Activated T-helper 1 cell treated with anti-CD3 and anti-CD28 coated beads, Interleukin-12 subunit alpha, Interleukin-12 subunit beta, Interleukin-2, Interleukin-4 antibody, amounts not matched to agents 30 ng/mL and 10 ng/mL and 1 ng/mL, durations not matched to agents 14 hours and 24 hours and 36 hours (primary cell): ENCODE measurements at regions of chr10 and their contacts with region 1.

Region 1: GRCh38 chr10:68901104-68901927 is at the start of gene DDX50:
- DNase-seq: peak; percentile 95
- H3K4me3 Mint-ChIP-seq: peak within 1 kb of the TSS; percentile 92
- H3K27ac Mint-ChIP-seq: peak within 1 kb of the TSS; percentile 97
- H3K4me1 Mint-ChIP-seq: peaks cover 49% of the 10 kb centered on the region
- H3K27me3 Mint-ChIP-seq: no peaks in the 10 kb centered on the region
- total RNA-seq, gene DDX50: 53.0 and 55.0 TPM in 2 replicates

Region 2: GRCh38 chr10:68208424-68209042 is 692.8 kb before region 1 on chr10:
- intact Hi-C with region 1: loop called (anchors 5 kb)
- DNase-seq: no peak
- H3K4me3 Mint-ChIP-seq: no peak overlapping the region
- H3K27ac Mint-ChIP-seq: no peak overlapping the region
- H3K4me1 Mint-ChIP-seq: no peaks in the 10 kb centered on the region
- H3K27me3 Mint-ChIP-seq: peaks cover 18% of the 10 kb centered on the region

Region 3: GRCh38 chr10:68471586-68472408 is 429.5 kb before region 1 on chr10 and contains the start of gene DNA2:
- intact Hi-C with region 1: loop called (anchors 2 kb)
- DNase-seq: peak; percentile 71
- H3K4me3 Mint-ChIP-seq: peak within 1 kb of the TSS; percentile 96
- H3K27ac Mint-ChIP-seq: peak within 1 kb of the TSS; percentile 95
- H3K4me1 Mint-ChIP-seq: peaks cover 25% of the 10 kb centered on the region
- H3K27me3 Mint-ChIP-seq: no peaks in the 10 kb centered on the region
- total RNA-seq, gene DNA2: 50.2 and 54.3 TPM in 2 replicates

Region 4: GRCh38 chr10:68720793-68721672 is 180.3 kb before region 1 on chr10 and contains the start of gene CCAR1:
- intact Hi-C with region 1: loop called (anchors 1 kb)
- DNase-seq: peak; percentile 95
- H3K4me3 Mint-ChIP-seq: peak within 1 kb of the TSS; percentile 90
- H3K27ac Mint-ChIP-seq: peak within 1 kb of the TSS; percentile 98
- H3K4me1 Mint-ChIP-seq: peaks cover 14% of the 10 kb centered on the region
- H3K27me3 Mint-ChIP-seq: peaks cover 2% of the 10 kb centered on the region
- total RNA-seq, gene CCAR1: 102 and 106 TPM in 2 replicates

Region 5: DNA sequence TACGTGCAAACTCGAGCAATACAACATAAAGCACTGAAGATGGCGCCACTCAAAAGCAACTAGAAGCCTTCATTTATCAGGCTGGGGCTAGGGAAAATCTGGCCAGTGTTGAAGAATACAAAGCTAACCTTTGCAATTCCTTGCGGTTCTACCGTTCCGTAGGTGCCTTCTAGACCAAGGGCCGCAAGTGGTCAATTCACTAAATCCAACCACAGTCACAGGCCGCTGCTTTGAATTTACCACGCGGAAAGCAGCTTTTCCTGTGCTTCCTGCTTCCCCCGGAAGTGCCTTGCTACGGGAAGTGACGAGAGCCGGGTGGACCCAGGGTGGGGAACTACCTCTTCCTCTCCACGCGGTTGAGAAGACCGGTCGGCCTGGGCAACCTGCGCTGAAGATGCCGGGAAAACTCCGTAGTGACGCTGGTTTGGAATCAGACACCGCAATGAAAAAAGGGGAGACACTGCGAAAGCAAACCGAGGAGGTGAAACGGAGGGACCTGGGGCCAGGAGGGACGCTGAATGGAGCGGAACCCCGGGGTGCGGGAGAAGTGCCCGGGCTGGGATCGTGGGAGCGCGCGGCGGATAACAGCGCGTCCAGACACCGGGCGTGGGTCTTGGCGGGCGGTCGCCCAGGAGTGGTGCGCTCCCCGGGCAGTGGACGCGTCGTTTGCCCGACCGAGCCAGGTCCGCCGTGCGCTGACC is 54.7 kb after region 1 on chr10 and contains the start of gene DDX21:
- intact Hi-C with region 1: loop called (anchors 1 kb)
- DNase-seq: peak; percentile 87
- H3K4me3 Mint-ChIP-seq: peak within 1 kb of the TSS; percentile 99
- H3K27ac Mint-ChIP-seq: peak within 1 kb of the TSS; percentile 99
- H3K4me1 Mint-ChIP-seq: peaks cover 25% of the 10 kb centered on the region
- H3K27me3 Mint-ChIP-seq: no peaks in the 10 kb centered on the region
- total RNA-seq, gene DDX21: 267 and 278 TPM in 2 replicates

Region 6: DNA sequence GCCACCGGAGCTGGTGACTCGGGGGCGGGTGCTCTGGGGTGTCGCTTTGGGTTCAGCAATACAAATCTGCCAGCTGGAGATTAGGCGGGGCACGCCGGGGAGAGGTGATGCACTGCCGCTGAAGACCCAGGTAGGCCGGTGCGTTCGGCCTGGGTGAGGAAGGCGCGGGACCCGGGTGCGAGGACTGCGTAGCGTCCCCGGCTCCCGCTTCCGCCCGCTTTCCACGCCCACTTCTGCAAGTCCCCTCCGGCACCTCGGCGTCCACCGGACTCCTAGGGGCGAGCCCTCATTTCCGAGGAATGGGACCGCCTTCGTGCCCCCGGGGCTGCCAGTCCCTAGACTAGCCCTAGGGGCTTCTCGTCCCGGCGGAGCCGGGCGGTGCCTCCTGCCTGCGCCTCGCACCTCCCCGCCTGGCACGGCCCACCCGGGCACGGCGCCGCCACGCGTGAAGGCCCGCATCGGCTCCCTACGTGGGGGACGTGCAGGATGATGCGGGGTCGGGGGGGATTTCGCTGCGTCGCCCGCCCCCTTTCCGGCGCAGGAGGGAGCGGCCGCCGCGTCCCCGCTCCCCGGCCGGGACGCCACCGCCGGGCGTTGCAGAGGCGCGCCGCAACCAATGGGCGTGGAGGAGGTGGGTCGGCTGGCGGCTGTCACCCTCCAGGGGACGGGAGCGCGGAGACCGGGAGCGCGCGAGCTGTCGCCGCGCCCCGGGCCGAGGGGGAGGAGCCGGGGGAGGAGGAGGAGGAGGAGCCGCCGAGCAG is 417.0 kb after region 1 on chr10:
- intact Hi-C with region 1: loop called (anchors 2 kb)
- DNase-seq: peak; percentile 91
- H3K4me3 Mint-ChIP-seq: peak overlapping the region; percentile 99
- H3K27ac Mint-ChIP-seq: peak overlapping the region; percentile 98
- H3K4me1 Mint-ChIP-seq: peaks cover 50% of the 10 kb centered on the region
- H3K27me3 Mint-ChIP-seq: peaks cover 8% of the 10 kb centered on the region